ENCODE measurements at regions of chr17 and their contacts with region 1.

Region 1: DNA sequence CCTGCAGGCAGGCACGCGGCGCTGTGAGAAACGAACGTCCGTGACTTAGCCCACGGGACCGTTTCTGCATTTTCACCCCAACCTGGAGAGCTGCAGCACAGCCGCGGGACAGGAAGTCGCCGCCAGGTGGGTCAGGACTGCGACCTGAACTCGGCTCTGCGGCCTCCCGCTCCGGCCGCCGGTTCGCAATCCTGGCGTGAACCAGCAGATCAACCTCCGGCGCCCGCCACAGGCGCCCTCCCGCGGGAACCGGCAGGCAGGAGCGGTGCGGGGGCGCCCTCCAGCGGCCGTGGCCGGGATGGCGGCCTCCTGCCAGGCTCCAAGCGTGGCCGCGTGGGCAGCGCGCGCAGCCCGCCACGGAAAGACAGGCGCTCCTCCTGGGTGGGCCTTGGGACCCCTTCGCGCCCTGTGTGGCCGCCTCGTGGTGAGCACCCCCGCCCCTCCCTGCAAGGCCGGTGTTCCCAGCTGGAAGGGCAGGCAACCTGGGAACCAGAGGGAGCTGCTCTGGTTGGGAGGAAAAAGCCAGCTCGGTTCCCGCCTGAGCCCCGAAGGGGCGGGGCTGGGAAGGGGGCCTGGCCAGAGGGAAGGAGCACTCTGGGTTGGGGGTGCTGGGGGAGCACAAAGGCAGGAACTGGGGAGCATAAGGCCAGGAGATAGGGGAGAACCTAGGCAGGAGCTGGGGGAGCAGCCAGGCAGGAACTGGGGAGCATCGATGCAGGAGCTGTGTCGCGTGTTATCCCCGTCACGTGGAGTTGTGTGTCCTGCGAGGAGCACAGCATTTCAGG is 28.2 kb downstream of the ACTG1 start:
- DNase-seq: peak; percentile 72 to 78 (median 75)
- H3K4me3 ChIP-seq: peak overlapping the region; percentile 6 to 76 (median 11)
- H3K4me3 Mint-ChIP-seq: peak overlapping the region; percentile 62 to 64
- H3K27ac ChIP-seq: no peak overlapping the region
- H3K27ac Mint-ChIP-seq: no peak overlapping the region
- H3K4me1 ChIP-seq: peaks cover 50 to 69% of the 10 kb centered on the region in 2 donors
- H3K4me1 Mint-ChIP-seq: peaks cover 41% of the 10 kb centered on the region
- H3K27me3 ChIP-seq: peaks cover 0 to 30% of the 10 kb centered on the region in 2 donors
- H3K27me3 Mint-ChIP-seq: peaks cover 18 to 38% (median 24%) of the 10 kb centered on the region in 3 donors
- CTCF ChIP-seq: peak; percentile 98

Region 2: DNA sequence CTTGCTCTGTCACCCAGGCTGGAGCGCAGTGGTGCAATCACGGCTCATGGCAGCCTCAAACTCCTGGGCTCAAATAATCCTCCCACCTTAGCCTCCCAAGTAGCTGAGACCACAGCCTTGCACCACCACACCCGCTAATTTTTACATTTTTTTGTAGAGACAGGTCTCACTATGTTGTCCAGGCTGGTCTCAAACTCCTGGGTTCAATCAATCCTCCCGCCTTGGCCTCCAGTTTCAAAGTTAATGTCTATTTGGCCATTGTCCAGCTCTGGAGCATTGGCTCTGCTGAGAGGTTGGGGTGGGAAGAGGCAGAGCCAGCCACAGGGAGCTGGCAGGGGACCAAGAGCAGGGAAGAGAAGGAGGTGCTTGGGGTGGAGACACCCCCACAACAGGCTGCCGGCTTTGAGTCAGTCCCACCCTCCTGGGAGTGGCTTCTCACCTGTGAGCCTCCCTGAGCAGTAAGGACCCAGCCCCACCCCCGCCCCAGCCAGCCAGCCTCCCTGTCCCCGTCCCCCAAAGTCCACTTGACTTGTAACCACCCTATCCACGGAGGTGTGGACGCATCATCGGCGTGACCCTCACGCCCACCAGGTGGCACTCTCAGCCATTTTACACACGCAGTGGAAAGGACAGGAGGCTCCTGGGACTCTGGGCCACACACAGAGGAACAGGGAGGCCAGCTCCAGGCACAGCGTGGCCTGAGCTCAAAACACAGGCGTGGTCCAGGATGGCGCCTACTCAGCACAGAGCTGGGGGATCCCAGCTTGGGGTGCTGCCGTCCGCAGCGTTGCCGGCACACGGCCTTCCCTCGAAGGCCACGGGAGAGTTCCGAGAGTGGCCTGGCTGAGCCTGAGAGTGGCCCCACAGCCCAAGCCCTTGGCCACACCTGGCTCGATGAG is 341.8 kb before region 1 on chr17:
- intact Hi-C with region 1: loop called in 1 of 2 experiments (anchors 5 kb)
- DNase-seq: peak; percentile 82 to 84 (median 83)
- H3K4me3 ChIP-seq: no peak overlapping the region
- H3K4me3 Mint-ChIP-seq: peak overlapping the region in 1 of 2 donors; percentile 11
- H3K27ac ChIP-seq: no peak overlapping the region
- H3K27ac Mint-ChIP-seq: peak overlapping the region in 1 of 7 donors; percentile 46
- H3K4me1 ChIP-seq: peaks cover 4 to 18% of the 10 kb centered on the region in 2 donors
- H3K4me1 Mint-ChIP-seq: peaks cover 17% of the 10 kb centered on the region
- H3K27me3 ChIP-seq: no peaks in the 10 kb centered on the region
- H3K27me3 Mint-ChIP-seq: peaks cover 1 to 4% (median 2%) of the 10 kb centered on the region in 3 donors
- CTCF ChIP-seq: peak; percentile 76

Region 3: GRCh38 chr17:81285179-81285878 is 199.1 kb before region 1 on chr17:
- intact Hi-C with region 1: loop called (anchors 5 to 10 kb)
- DNase-seq: peak; percentile 97 to 98 (median 98)
- H3K4me3 ChIP-seq: peak overlapping the region; percentile 5 to 75 (median 44)
- H3K4me3 Mint-ChIP-seq: peak overlapping the region; percentile 79 to 84
- H3K27ac ChIP-seq: peak overlapping the region; percentile 95 to 97
- H3K27ac Mint-ChIP-seq: peak overlapping the region; percentile 93 to 98 (median 96)
- H3K4me1 ChIP-seq: peaks cover 60 to 61% of the 10 kb centered on the region in 2 donors
- H3K4me1 Mint-ChIP-seq: peaks cover 54% of the 10 kb centered on the region
- H3K27me3 ChIP-seq: no peaks in the 10 kb centered on the region
- H3K27me3 Mint-ChIP-seq: no peaks in the 10 kb centered on the region
- CTCF ChIP-seq: no peak

Region 4: DNA sequence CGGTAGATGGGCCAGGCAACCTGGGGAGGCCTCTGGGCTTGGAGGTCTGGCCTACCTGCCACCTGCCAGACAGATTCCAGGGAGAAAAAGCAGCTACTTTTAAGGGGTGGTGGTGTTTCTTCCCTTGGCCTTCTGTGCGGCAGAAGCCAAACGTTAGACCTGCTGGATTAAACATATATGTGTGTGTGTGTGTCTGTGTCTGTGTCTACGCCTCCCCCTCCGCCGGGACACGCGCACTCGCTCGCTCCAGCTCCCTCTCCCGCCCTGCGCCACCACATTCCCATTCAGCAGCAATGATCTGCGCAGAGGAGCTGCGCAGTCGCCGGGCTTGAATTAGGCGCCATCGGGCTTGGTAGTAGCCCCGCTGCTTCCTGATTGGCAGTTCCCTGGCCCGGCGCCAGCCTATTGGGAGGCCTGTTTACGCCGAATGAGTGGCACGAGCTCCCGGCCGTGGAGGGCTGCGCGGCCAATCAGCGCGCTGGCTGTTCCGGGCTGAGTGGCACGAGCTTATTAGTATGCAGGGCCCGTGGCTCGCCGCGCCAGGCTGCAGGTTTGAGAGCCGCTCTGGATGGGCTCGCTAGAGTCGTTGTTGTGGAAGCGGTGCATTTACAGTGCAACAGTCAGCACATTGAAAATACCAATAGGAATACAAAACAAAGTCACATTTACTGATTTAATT is 89.3 kb before region 1 on chr17 and contains the start of gene BAHCC1:
- intact Hi-C with region 1: loop called (anchors 2 to 5 kb)
- DNase-seq: peak; percentile 99 to 100 (median 99)
- H3K4me3 ChIP-seq: peak within 1 kb of the TSS; percentile 55 to 93 (median 62)
- H3K4me3 Mint-ChIP-seq: peak within 1 kb of the TSS; percentile 92 to 93
- H3K27ac ChIP-seq: peak within 1 kb of the TSS; percentile 64 to 92
- H3K27ac Mint-ChIP-seq: peak within 1 kb of the TSS; percentile 82 to 95 (median 93)
- H3K4me1 ChIP-seq: peaks cover 48 to 78% of the 10 kb centered on the region in 2 donors
- H3K4me1 Mint-ChIP-seq: peaks cover 49% of the 10 kb centered on the region
- H3K27me3 ChIP-seq: no peaks in the 10 kb centered on the region
- H3K27me3 Mint-ChIP-seq: peaks cover 0 to 4% (median 2%) of the 10 kb centered on the region in 3 donors
- CTCF ChIP-seq: no peak
- polyA plus RNA-seq, gene BAHCC1: 0.11 to 8.8 (median 0.27) TPM

Region 5: GRCh38 chr17:81428948-81429774 is 55.2 kb before region 1 on chr17:
- intact Hi-C with region 1: loop called (anchors 5 kb)
- DNase-seq: peak in 1 of 3 donors; percentile 39
- H3K4me3 ChIP-seq: no peak overlapping the region
- H3K4me3 Mint-ChIP-seq: peak overlapping the region; percentile 37 to 77
- H3K27ac ChIP-seq: no peak overlapping the region
- H3K27ac Mint-ChIP-seq: peak overlapping the region in 1 of 7 donors; percentile 54
- H3K4me1 ChIP-seq: peaks cover 38 to 45% of the 10 kb centered on the region in 2 donors
- H3K4me1 Mint-ChIP-seq: peaks cover 25% of the 10 kb centered on the region
- H3K27me3 ChIP-seq: peaks cover 0 to 26% of the 10 kb centered on the region in 2 donors
- H3K27me3 Mint-ChIP-seq: peaks cover 7 to 19% (median 13%) of the 10 kb centered on the region in 3 donors
- CTCF ChIP-seq: no peak

Measured in CD14-positive monocyte (primary cell).